Transverse colon (tissue), 4 donors: ENCODE measurements at regions of chr4 and their contacts with region 1.

Region 1: DNA sequence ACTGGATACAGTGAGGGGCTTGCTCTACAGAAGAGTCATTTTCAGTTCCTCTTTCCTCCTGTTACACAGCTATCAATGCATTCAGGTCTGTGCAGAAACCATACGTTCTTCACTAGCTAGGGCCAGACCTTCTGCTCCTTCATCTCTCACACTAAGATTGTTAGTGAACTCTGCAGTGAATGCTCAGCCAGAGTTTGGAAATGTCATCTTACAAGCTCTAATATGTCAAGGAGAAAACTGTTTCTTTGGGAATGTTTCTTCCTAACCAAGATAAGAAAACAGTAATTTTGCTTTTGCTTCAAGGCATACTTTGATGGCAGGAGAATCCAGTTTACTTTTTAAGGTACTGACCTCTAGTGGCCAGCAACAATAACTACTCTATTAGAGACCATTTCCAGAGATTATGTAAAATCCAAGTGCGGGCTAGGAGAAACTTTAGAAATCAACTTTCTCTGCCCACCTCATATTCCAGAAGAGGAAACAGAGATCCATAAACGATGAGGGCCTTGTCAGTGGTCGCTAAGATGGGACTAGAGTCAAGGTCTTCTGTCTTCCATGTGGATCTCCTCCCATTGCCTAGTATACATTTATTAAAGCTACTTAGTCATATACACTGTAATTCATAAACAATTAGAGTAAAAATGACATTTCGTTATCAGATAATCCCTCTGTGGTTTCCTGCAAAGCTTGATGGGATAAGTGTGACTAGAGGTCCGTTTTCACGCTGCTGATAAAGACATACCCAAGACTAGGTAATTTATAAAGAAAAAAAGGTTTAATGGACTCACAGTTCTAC is 12.1 kb upstream of the CC2D2A start:
- DNase-seq: no peak
- H3K4me3 ChIP-seq: no peak overlapping the region
- H3K27ac ChIP-seq: peak overlapping the region in 3 of 4 donors; percentile 20 to 64 (median 30)
- H3K4me1 ChIP-seq: peaks cover 0 to 10% (median 5%) of the 10 kb centered on the region in 4 donors
- H3K27me3 ChIP-seq: no peaks in the 10 kb centered on the region
- CTCF ChIP-seq: peak; percentile 63 to 76 (median 69)
- EP300 ChIP-seq: no peak
- POLR2A ChIP-seq: no peak

Region 2: GRCh38 chr4:15001869-15002658 is 455.5 kb before region 1 on chr4 and contains the start of gene CPEB2:
- in situ Hi-C with region 1: loop called in 1 of 4 experiments (anchors 25 kb)
- intact Hi-C with region 1: no loop called
- DNase-seq: peak; percentile 96
- H3K4me3 ChIP-seq: peak within 1 kb of the TSS; percentile 85 to 97 (median 89)
- H3K27ac ChIP-seq: peak within 1 kb of the TSS; percentile 99 to 100 (median 100)
- H3K4me1 ChIP-seq: peaks cover 0 to 23% (median 17%) of the 10 kb centered on the region in 4 donors
- H3K27me3 ChIP-seq: no peaks in the 10 kb centered on the region
- CTCF ChIP-seq: no peak
- EP300 ChIP-seq: peak; percentile 74
- POLR2A ChIP-seq: peak; percentile 98
- total RNA-seq, gene CPEB2: 23.2 to 38.5 (median 26.5) TPM

Region 3: DNA sequence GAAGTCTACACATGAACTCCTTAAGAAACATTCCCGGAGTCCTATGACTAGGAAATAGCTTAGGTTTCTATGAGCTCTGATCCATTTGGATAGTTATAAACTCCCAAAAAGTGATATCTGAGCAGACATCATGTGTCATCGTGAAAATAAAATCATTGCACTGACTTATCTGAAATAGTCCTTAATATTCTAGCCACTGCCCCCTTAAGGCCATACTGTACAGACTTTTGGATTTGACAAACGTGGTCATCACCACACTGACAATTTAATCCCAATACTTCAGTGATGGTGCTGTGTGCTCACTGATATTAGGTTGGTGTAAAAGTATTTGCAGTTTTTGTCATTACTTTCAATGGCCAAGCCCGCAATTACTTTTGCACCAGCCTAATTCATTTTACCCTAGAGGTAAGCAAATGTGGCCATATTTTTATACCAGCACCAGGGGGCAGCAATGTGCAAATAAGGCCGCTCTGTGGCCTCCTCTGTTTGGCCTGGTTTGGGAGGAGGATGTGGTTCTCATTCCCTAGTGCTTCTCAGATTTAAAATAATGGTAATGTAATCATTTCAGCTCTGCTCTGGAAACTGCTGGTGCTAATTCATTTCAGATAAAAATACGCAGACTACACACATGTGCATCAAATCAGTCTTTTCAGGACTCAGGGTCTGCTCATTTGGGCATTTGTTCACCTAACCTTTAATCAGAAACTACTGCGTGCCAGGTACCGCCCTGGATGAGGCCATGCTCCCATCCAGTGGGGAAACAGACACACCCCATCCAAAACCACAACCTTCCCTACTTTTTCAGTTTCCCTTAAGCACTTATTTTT is 226.1 kb before region 1 on chr4:
- in situ Hi-C with region 1: loop called (anchors 5 to 10 kb)
- intact Hi-C with region 1: loop called (anchors 2 kb)
- DNase-seq: peak; percentile 80
- H3K4me3 ChIP-seq: no peak overlapping the region
- H3K27ac ChIP-seq: peak overlapping the region in 1 of 4 donors; percentile 28
- H3K4me1 ChIP-seq: peaks cover 4 to 21% (median 7%) of the 10 kb centered on the region in 4 donors
- H3K27me3 ChIP-seq: no peaks in the 10 kb centered on the region
- CTCF ChIP-seq: peak; percentile 61 to 71 (median 66)
- EP300 ChIP-seq: no peak
- POLR2A ChIP-seq: no peak

Region 4: DNA sequence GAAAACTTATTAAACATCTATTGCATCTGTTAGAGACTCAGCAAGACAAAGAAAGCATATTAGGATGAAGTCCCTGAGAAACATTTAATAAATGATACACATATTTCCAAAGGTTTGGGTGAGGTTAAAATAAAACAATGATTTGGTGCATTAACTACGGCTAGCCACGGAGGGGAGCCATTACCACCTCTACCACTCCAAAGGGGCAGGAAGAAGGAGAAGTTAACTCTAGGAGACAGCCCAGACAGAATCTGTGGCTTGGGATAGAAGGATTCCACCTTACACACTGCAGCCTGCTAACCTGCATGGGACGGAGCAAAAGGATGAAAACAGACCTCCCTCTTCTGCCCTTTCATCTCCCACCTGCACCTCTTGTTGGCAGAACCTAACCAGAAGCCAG is 218.9 kb before region 1 on chr4:
- in situ Hi-C with region 1: loop called (anchors 5 to 10 kb)
- intact Hi-C with region 1: loop called (anchors 2 kb)
- DNase-seq: no peak
- H3K4me3 ChIP-seq: no peak overlapping the region
- H3K27ac ChIP-seq: no peak overlapping the region
- H3K4me1 ChIP-seq: peaks cover 0 to 6% (median 2%) of the 10 kb centered on the region in 4 donors
- H3K27me3 ChIP-seq: no peaks in the 10 kb centered on the region
- CTCF ChIP-seq: peak; percentile 35 to 57 (median 43)
- EP300 ChIP-seq: no peak
- POLR2A ChIP-seq: no peak